IMR-90 (cell line): ENCODE measurements at regions of chr3 and their contacts with region 1.

Region 1: GRCh38 chr3:185659942-185660921 is 74.1 kb downstream of the SENP2 start:
- DNase-seq: peak; percentile 81
- ATAC-seq: peak; percentile 9
- H3K4me3 ChIP-seq: no peak overlapping the region
- H3K27ac ChIP-seq: peak overlapping the region; percentile 11; the same call in 1 of the 2 replicates
- H3K4me1 ChIP-seq: peaks cover 31% of the 10 kb centered on the region
- H3K27me3 ChIP-seq: no peaks in the 10 kb centered on the region
- CTCF ChIP-seq: peak; percentile 93
- POLR2A ChIP-seq: no peak
- RAD21 ChIP-seq: peak; percentile 91

Region 2: GRCh38 chr3:185460719-185461350 is 199.4 kb before region 1 on chr3:
- CTCF ChIA-PET with region 1: no interaction called
- POLR2A ChIA-PET with region 1: no interaction called
- dilution Hi-C with region 1: no loop called
- in situ Hi-C with region 1: no loop called
- intact Hi-C with region 1: no loop called
- DNase-seq: peak; percentile 34
- ATAC-seq: no peak
- H3K4me3 ChIP-seq: no peak overlapping the region
- H3K27ac ChIP-seq: no peak overlapping the region
- H3K4me1 ChIP-seq: no peaks in the 10 kb centered on the region
- H3K27me3 ChIP-seq: no peaks in the 10 kb centered on the region
- CTCF ChIP-seq: peak; percentile 45
- POLR2A ChIP-seq: no peak
- RAD21 ChIP-seq: peak; percentile 35

Region 3: DNA sequence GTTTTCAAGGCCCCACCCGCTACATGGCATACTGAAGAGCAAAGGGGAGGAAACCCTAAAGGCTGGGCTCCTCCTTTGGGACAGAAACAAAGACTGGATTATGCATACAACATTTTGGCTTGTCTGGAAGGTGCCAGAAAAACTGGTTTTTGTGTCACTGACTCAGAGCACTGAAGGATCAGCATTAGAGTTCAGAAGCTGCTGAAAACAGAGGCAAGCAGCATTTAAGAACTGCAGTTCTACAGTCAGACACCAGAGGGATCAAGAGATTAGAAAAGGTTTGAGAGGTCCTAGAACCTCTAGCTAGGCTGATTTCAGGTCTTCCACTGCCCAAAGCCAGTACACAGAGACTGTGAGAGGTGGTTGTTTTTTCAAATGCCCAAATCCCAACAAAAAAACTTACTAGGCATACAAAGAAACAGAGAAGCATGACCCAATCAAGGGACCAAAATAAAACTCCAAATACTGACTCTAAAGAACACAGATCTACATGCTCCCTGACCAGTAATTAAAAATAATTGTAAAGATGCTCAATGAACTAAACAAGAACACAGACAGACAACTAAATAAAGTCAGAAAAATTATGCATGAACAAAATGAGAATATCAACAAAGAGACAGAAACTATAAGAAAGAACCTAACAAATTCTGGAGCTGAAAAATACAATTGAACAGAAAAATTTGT is 17.1 kb after region 1 on chr3:
- CTCF ChIA-PET with region 1: interaction called, 14 read pairs
- POLR2A ChIA-PET with region 1: no interaction called
- dilution Hi-C with region 1: no loop called
- in situ Hi-C with region 1: no loop called
- intact Hi-C with region 1: no loop called
- DNase-seq: peak; percentile 77
- ATAC-seq: peak; percentile 94
- H3K4me3 ChIP-seq: no peak overlapping the region
- H3K27ac ChIP-seq: no peak overlapping the region
- H3K4me1 ChIP-seq: no peaks in the 10 kb centered on the region
- H3K27me3 ChIP-seq: no peaks in the 10 kb centered on the region
- CTCF ChIP-seq: peak; percentile 65
- POLR2A ChIP-seq: no peak
- RAD21 ChIP-seq: peak; percentile 78

Region 4: DNA sequence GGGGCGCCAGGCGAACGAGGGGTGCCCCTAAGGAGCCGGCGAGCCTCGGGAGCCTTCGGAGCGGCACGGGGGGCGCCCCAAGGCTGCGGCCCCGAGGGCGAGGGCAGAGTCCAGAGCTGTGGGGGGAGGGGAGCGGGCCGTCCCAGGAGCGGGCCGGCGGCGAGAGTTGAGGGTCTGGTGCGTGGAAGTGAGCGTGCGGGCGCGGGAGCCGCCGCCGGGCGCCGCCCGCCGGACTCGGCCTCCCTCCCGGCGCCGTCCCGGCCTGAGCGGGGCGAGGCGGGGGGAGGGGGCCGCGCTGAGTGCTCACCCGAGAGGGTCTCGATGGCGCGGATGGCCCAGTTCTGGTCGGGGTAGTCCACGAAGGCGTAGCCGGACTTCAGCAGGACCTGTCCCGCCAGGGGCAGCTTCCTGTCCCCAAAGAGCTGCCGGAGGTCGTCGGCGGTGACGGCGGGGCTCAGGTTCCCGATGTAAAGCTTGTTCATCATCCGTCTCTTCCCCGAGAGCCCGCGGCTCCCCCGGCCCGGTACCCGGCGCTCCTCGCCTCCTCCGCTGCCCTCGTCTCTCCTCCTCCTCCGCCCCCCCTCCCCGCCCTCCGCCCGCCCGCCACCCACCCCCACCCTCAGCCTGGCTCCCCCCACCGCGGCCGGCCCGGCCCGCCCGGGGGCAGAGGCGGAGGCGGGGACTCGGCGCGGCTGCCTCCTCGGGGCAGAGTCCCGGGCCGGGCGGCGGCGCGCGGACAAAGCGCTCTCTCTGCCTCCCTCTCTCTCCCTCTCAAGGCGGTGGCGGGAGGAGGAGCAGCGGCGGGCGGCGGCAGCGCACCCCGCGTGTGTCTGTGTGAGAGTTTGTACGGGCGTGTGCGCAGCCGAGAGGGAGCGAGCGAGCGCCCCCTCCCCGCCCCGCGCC is 164.5 kb after region 1 on chr3 and contains the start of gene IGF2BP2:
- CTCF ChIA-PET with region 1: no interaction called
- POLR2A ChIA-PET with region 1: interaction called, 3 read pairs
- dilution Hi-C with region 1: no loop called
- in situ Hi-C with region 1: no loop called
- intact Hi-C with region 1: loop called (anchors 2 kb)
- DNase-seq: peak; percentile 80
- ATAC-seq: peak; percentile 82
- H3K4me3 ChIP-seq: peak within 1 kb of the TSS; percentile 88
- H3K27ac ChIP-seq: peak within 1 kb of the TSS; percentile 100
- H3K4me1 ChIP-seq: peaks cover 4% of the 10 kb centered on the region
- H3K27me3 ChIP-seq: no peaks in the 10 kb centered on the region
- CTCF ChIP-seq: peak; percentile 27; the same call in 1 of the 2 replicates
- POLR2A ChIP-seq: peak; percentile 82
- RAD21 ChIP-seq: peak; percentile 27
- total RNA-seq, gene IGF2BP2: 88.2 and 126 TPM in 2 replicates

Region 5: DNA sequence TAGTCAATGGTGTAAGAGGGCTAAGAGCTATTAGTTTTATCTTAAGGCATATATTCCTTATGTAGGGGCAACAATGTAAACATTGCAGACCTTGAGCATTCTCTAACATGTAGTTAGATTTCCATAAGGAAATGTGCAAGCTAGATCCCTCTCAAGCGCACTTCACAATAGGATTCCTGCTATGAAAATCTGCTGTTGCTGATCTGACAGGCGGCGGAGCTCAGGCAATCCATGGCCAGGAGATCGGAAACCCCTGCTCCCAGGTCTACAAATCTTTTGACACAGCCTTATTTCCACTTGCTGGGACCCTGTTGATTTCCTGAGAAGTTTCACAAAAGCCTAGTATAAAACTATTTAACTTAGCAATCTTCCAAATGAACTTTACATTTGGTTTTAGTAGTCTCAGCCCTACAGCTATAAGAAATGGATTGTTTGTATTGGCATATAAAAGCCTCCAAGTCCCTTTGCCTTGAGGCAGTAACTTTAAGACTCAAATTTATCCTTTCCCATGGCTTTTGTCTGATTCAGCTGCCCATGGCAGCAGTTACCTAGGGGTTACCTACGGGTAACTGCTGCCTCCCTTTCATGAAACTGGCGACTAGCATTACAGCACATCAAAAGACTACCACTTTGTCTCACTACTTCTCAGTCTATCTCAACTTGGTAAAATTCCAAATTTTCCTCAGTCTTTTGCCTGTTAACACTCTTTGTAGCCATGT is 254.8 kb after region 1 on chr3:
- CTCF ChIA-PET with region 1: interaction called, 4 read pairs
- POLR2A ChIA-PET with region 1: no interaction called
- dilution Hi-C with region 1: no loop called
- in situ Hi-C with region 1: loop called (anchors 25 kb)
- intact Hi-C with region 1: loop called (anchors 5 kb)
- DNase-seq: no peak
- ATAC-seq: no peak
- H3K4me3 ChIP-seq: no peak overlapping the region
- H3K27ac ChIP-seq: no peak overlapping the region
- H3K4me1 ChIP-seq: no peaks in the 10 kb centered on the region
- H3K27me3 ChIP-seq: no peaks in the 10 kb centered on the region
- CTCF ChIP-seq: no peak
- POLR2A ChIP-seq: peak; percentile 14; the same call in 1 of the 2 replicates
- RAD21 ChIP-seq: no peak

Region 6: GRCh38 chr3:185976977-185977678 is 316.9 kb after region 1 on chr3:
- CTCF ChIA-PET with region 1: interaction called, 3 read pairs
- POLR2A ChIA-PET with region 1: no interaction called
- dilution Hi-C with region 1: no loop called
- in situ Hi-C with region 1: no loop called
- intact Hi-C with region 1: loop called (anchors 5 kb)
- DNase-seq: peak; percentile 64
- ATAC-seq: peak; percentile 93
- H3K4me3 ChIP-seq: no peak overlapping the region
- H3K27ac ChIP-seq: no peak overlapping the region
- H3K4me1 ChIP-seq: 0 out of 2 replicates have a peak, but pooled peaks cover 2% of the 10 kb centered on the region
- H3K27me3 ChIP-seq: no peaks in the 10 kb centered on the region
- CTCF ChIP-seq: peak; percentile 78
- POLR2A ChIP-seq: no peak
- RAD21 ChIP-seq: peak; percentile 71

Region 7: GRCh38 chr3:186259612-186260383 is 599.6 kb after region 1 on chr3:
- CTCF ChIA-PET with region 1: no interaction called
- POLR2A ChIA-PET with region 1: no interaction called
- dilution Hi-C with region 1: no loop called
- in situ Hi-C with region 1: loop called (anchors 25 kb)
- intact Hi-C with region 1: no loop called
- DNase-seq: peak; percentile 73
- ATAC-seq: peak; percentile 99
- H3K4me3 ChIP-seq: peak overlapping the region; percentile 6; the same call in 1 of the 2 replicates
- H3K27ac ChIP-seq: no peak overlapping the region
- H3K4me1 ChIP-seq: no peaks in the 10 kb centered on the region
- H3K27me3 ChIP-seq: peaks cover 14% of the 10 kb centered on the region
- CTCF ChIP-seq: peak; percentile 79
- POLR2A ChIP-seq: no peak
- RAD21 ChIP-seq: peak; percentile 74